ENCODE measurements at regions of chr17 and their contacts with region 1.

Region 1: DNA sequence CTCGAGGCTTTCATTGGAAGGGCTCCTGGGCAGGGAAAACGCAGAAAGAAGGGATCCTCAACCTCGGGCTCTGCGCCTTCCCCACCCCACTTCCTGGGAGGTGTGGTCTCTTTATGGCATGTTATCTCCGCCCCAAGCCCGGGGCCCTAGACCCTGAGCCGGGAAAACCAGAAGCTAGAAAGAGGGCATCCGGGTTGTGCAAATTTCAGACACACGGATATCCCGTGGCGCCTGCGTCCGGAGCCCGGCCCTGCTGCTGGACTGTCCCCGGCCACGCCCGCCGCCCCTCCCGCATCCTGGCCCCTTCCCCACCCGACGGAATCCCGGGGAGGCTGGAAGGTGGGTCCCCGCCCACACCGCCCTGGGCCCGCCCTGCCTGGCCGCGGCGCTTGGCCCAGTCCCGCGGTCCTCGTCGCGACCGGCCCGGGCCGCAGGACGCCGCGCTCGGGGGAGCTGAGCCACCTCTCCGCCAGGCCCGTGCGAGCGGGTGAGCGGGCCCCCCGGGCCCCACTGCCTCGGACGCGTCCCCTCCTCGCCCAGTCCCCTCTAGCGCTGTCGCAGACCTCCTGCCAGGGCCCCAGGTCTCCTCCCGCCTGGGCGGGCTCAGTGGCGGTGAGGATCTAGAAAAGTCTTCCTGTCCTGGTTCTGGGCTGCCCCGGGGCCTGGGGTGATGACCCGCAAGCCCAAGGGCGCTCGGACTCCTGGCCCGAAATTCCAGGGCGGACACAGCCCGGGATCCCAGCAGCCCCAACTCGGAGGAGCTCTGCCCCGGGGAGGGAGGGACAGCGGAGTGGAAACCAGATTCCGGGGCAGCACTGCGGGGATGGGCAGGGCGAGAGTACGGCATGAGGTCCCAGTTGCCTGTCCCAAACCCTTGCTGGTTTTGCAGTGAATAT is at the start of gene SLC16A5:
- DNase-seq: peak; percentile 95 to 99
- ATAC-seq: peak; percentile 75 to 82
- H3K4me3 ChIP-seq: peak within 1 kb of the TSS; percentile 67
- H3K27ac ChIP-seq: peak within 1 kb of the TSS; percentile 95 to 96
- H3K4me1 ChIP-seq: peaks cover 77% of the 10 kb centered on the region
- CTCF ChIP-seq: no peak
- EP300 ChIP-seq: no peak
- POLR2A ChIP-seq: peak; percentile 87
- RAD21 ChIP-seq: peak in 1 of 2 experiments; percentile 28; a peak in 1 of 5 replicates
- polyA plus RNA-seq, gene SLC16A5: 19.0 and 20.1 TPM in 2 replicates

Region 2: DNA sequence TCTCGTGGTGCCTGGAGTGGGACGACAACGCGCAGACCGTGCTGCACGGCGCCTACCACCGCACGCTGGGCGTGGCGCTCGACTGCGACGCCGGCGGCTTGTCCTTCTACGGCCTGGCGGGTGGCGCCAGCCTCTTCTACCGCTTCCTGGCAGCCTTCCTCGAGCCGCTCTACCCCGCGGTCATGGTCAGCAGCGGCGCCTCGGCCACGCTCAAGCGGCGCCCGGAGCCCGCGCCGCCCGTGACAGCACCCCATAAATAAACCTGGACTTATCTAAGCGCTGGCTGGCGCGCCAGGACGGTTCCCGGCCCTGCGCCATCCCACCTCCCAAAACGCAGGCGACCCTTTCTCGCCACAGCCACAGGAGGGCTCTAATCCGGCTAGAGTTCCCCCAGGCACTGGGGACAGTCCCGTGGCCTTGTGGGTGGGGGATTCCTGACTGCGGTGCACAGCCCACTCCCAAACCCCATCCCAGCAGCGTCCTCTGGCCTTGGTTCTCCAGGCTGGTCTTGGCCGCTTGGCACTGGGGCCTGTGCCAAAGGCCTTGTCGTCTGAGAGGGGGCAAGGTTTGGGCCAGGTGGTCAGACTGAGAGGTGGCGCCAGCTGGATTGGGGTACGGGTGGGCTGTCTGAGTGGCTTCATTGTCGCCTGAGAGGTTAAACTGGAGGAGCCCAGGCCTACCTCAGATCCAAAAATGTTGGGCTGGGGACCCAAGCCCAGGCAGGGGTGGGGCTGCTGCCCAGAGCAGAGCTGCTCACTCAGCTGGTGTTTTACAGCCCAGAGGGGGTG is 10.1 kb before region 1 on chr17:
- CTCF ChIA-PET with region 1: interaction called, 3,429 read pairs
- POLR2A ChIA-PET with region 1: interaction called, 21 read pairs
- DNase-seq: no peak
- ATAC-seq: no peak
- H3K4me3 ChIP-seq: no peak overlapping the region
- H3K27ac ChIP-seq: peak overlapping the region; percentile 78 to 86
- H3K4me1 ChIP-seq: peaks cover 40% of the 10 kb centered on the region
- CTCF ChIP-seq: no peak
- EP300 ChIP-seq: no peak
- POLR2A ChIP-seq: no peak
- RAD21 ChIP-seq: no peak

Measured in A549 (cell line).